Left colon (tissue), 2 donors: ENCODE measurements at regions of chr19 and their contacts with region 1.

Region 1: GRCh38 chr19:33778089-33778791 is 18.4 kb upstream of the KCTD15 start:
- DNase-seq: peak; percentile 47 to 87
- ATAC-seq: peak; percentile 95

Region 2: DNA sequence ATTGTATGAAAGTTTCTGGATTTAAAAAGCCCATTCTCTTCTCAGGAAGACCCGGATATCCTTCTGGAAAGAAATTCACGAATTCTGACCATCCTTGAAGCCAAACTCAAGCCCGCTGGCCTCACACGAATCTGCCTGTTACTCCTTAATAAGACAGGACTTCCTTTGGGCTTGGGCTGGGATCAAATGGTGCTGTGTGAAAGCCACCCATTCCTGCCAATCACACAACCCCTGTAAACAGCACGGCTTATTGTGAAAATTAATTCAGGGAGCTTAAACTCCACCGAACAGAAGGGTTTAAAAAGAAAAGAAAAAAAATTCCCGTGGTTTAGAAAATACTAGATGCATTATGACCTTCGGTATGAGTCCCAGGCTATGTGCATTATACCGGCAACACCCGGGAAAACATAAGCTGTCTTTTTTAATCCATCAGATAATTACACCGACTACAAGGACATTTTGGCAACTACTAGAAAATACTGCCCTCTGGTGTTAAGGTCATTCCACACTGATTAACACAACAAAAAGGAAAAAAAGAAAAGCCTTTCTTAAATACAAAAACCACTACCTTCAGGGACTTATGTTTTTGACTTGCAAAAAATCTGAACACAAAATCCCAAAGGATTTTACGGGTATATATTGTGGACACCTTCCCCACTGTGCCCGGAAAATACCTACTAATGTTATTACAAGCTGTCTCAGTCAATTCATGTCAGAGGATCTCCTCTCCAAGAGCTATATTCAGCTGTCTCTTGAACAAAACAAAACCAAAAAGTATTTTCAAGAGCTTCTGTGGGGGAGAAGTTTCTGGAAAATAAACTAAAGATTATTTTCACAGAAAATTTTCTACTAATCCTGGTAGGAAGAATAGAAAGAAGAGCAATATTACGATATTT is 318.0 kb after region 1 on chr19:
- intact Hi-C with region 1: loop called (anchors 5 to 10 kb)
- DNase-seq: no peak
- ATAC-seq: peak; percentile 57